Activated T-helper 1 cell treated with anti-CD3 and anti-CD28 coated beads, Interleukin-12 subunit alpha, Interleukin-12 subunit beta, Interleukin-2, Interleukin-4 antibody, amounts not matched to agents 30 ng/mL and 10 ng/mL and 1 ng/mL, durations not matched to agents 14 hours and 24 hours and 36 hours (primary cell): ENCODE measurements at regions of chr9 and their contacts with region 1.

Region 1: GRCh38 chr9:107172160-107172978 is 110.7 kb upstream of the RAD23B start:
- DNase-seq: peak; percentile 41
- H3K4me3 Mint-ChIP-seq: no peak overlapping the region
- H3K27ac Mint-ChIP-seq: peak overlapping the region; percentile 31
- H3K4me1 Mint-ChIP-seq: peaks cover 29% of the 10 kb centered on the region
- H3K27me3 Mint-ChIP-seq: no peaks in the 10 kb centered on the region

Region 2: GRCh38 chr9:105842023-105842644 is 1330.2 kb before region 1 on chr9:
- intact Hi-C with region 1: loop called (anchors 1 kb)
- DNase-seq: no peak
- H3K4me3 Mint-ChIP-seq: no peak overlapping the region
- H3K27ac Mint-ChIP-seq: no peak overlapping the region
- H3K4me1 Mint-ChIP-seq: no peaks in the 10 kb centered on the region
- H3K27me3 Mint-ChIP-seq: peaks cover 5% of the 10 kb centered on the region

Region 3: GRCh38 chr9:105901514-105902109 is 1270.8 kb before region 1 on chr9:
- intact Hi-C with region 1: loop called (anchors 5 kb)
- DNase-seq: no peak
- H3K4me3 Mint-ChIP-seq: no peak overlapping the region
- H3K27ac Mint-ChIP-seq: no peak overlapping the region
- H3K4me1 Mint-ChIP-seq: no peaks in the 10 kb centered on the region
- H3K27me3 Mint-ChIP-seq: peaks cover 4% of the 10 kb centered on the region

Region 4: GRCh38 chr9:106885451-106885850 is 286.9 kb before region 1 on chr9:
- intact Hi-C with region 1: no loop called
- DNase-seq: no peak
- H3K4me3 Mint-ChIP-seq: no peak overlapping the region
- H3K27ac Mint-ChIP-seq: no peak overlapping the region
- H3K4me1 Mint-ChIP-seq: no peaks in the 10 kb centered on the region
- H3K27me3 Mint-ChIP-seq: no peaks in the 10 kb centered on the region

Region 5: GRCh38 chr9:107158321-107158720 is 14.0 kb before region 1 on chr9:
- intact Hi-C with region 1: no loop called
- DNase-seq: no peak
- H3K4me3 Mint-ChIP-seq: no peak overlapping the region
- H3K27ac Mint-ChIP-seq: no peak overlapping the region
- H3K4me1 Mint-ChIP-seq: no peaks in the 10 kb centered on the region
- H3K27me3 Mint-ChIP-seq: peaks cover 3% of the 10 kb centered on the region

Region 6: GRCh38 chr9:107213561-107214028 is 41.2 kb after region 1 on chr9:
- intact Hi-C with region 1: loop called (anchors 1 kb)
- DNase-seq: peak; percentile 16
- H3K4me3 Mint-ChIP-seq: no peak overlapping the region
- H3K27ac Mint-ChIP-seq: peak overlapping the region; percentile 9
- H3K4me1 Mint-ChIP-seq: peaks cover 14% of the 10 kb centered on the region
- H3K27me3 Mint-ChIP-seq: peaks cover 3% of the 10 kb centered on the region

Region 7: DNA sequence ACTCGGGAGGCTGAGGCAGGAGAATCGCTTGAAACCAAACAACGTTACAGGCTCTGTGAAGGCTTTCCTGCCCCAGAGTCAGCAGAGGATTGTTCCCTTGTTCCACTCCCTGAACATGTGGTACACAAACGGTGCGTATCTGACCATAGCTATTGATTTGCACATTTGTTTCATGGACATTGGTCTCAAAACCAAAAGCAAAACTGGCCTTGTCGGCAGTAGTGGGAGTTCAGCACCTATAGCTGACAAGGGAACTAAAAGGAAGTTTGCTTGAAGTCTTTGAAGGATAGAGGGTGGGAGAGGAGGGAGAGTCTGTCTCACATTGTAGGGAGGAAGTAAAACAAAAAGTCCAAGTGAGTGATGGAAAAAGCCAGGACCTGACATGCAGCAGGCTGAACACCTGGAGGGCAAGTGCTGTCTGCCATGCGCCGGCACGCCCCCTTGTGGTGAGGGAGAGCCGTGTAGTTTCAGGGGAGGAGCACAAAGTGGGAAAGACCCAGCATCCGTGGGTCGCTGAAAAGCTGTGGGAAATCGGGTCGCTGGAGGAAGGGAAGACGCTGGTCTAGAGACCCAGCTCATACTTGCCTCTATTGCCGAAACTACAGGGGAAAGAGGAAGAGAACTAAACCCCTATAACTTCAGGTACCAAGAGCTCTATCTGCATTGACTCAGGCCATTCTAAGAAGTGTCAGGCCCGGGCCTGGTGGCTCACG is 168.7 kb after region 1 on chr9:
- intact Hi-C with region 1: loop called (anchors 5 kb)
- DNase-seq: peak; percentile 65
- H3K4me3 Mint-ChIP-seq: no peak overlapping the region
- H3K27ac Mint-ChIP-seq: no peak overlapping the region
- H3K4me1 Mint-ChIP-seq: peaks cover 10% of the 10 kb centered on the region
- H3K27me3 Mint-ChIP-seq: no peaks in the 10 kb centered on the region